Panc1 (cell line): ENCODE measurements at regions of chr4 and their contacts with region 1.

Region 1: DNA sequence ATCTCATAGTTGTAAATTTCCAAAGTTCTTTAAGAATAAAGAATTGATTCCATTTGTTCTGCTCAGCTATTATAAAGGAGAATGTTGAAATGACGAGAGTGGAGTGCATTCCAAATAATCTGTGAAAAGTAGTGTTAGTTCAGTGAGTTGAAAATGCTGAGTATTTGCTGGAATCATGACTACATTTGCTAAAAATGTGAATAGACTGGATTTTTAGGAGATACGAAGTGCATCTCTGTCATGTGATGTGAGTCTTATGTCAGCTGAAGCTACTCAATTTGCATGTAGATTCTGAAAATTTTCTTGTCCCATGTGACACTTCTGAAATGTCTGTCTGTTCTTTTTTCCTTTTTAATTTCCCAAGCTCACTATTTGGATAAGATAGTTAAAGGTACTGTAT is 206.0 kb downstream of the DCTD start:
- DNase-seq: no peak
- ATAC-seq: no peak
- H3K4me3 ChIP-seq: no peak overlapping the region
- H3K27ac ChIP-seq: no peak overlapping the region
- H3K4me1 ChIP-seq: no peaks in the 10 kb centered on the region
- H3K27me3 ChIP-seq: no peaks in the 10 kb centered on the region
- CTCF ChIP-seq: no peak

Region 2: GRCh38 chr4:182724414-182724813 is 13.2 kb after region 1 on chr4:
- CTCF ChIA-PET with region 1: no interaction called
- POLR2A ChIA-PET with region 1: no interaction called
- in situ Hi-C with region 1: no loop called
- intact Hi-C with region 1: no loop called
- DNase-seq: no peak
- ATAC-seq: no peak
- H3K4me3 ChIP-seq: no peak overlapping the region
- H3K27ac ChIP-seq: no peak overlapping the region
- H3K4me1 ChIP-seq: no peaks in the 10 kb centered on the region
- H3K27me3 ChIP-seq: no peaks in the 10 kb centered on the region
- CTCF ChIP-seq: no peak

Region 3: DNA sequence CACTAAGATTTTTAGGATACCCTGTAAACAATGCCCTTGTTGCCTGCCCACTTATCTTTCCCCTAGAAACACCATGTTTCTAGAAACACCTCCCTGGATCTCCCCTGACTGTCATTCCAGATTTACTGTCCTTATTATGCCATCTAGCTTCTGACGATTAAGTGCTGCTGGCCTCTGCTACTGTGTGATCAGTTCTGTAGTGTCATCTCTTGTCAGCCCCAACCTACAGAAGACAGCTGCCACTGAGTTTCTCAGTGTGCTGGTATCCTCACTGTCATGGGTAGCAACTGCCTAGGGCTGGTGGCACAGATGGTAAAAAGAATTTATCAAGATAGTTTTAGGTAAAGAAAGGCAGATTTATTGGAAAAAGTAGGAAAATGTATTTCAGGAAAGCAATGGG is 319.1 kb after region 1 on chr4:
- CTCF ChIA-PET with region 1: no interaction called
- POLR2A ChIA-PET with region 1: interaction called, 12 read pairs
- in situ Hi-C with region 1: no loop called
- intact Hi-C with region 1: no loop called
- DNase-seq: no peak
- ATAC-seq: no peak
- H3K4me3 ChIP-seq: no peak overlapping the region
- H3K27ac ChIP-seq: no peak overlapping the region
- H3K4me1 ChIP-seq: no peaks in the 10 kb centered on the region
- H3K27me3 ChIP-seq: no peaks in the 10 kb centered on the region
- CTCF ChIP-seq: no peak